Common myeloid progenitor, CD34-positive (primary cell): ENCODE measurements at regions of chr3 and their contacts with region 1.

Region 1: DNA sequence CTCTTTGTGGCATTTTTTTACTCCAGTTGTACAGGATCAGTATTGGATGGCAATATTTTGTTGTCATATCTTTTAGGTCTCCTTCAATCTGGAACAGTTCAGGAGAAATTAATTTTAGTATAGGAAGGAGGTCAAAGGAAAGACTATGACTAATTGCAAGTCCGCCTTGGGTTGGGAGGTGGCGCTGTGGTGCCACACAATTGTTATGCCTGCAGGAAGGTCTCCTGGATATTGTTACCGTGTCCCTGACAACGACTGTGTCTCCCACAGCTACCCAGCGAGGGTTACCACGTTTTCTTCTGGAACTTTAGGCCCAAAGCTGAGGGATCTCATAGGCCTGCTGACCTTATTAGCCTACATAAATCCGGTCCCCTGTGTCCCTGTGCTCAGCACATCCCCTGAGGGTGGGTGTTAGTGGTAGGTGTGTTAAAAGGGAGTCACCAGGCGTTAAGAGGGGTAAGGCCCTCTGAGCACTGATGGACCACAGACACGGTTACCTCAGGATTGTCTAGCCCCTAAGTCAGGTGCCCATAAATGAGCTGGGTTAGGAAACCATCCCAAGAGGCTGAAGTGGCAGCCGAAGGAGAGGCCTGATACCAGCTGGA is 31.5 kb downstream of the KCNAB1 start:
- DNase-seq: peak; percentile 56 to 77 (median 71)
- H3K4me3 ChIP-seq: no peak overlapping the region
- H3K27ac ChIP-seq: no peak overlapping the region
- H3K4me1 ChIP-seq: peaks cover 3 to 9% (median 6%) of the 10 kb centered on the region in 4 experiments
- H3K27me3 ChIP-seq: peaks cover 0 to 2% (median 0%) of the 10 kb centered on the region in 5 experiments

Region 2: DNA sequence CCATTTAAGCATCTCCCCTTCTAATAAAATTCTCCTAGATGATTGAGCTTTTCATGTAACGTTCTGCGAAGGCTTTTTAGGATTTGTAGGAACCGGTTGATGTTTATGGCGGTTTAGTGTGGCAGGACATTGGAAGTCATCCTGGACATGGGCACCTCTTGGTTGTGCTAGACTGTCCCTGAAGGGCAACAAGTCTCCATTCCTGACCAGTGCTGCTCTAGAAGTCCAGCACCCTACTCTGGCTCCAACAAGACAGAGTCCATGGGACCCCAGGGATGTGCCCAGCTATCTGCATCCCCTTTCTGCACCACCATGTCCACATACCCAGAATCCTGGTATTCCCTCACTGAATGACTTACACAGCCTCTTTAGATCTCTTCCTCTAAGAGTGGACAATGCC is 14.9 kb after region 1 on chr3:
- CTCF ChIA-PET with region 1: interaction called, 27 read pairs
- POLR2A ChIA-PET with region 1: no interaction called
- DNase-seq: no peak
- H3K4me3 ChIP-seq: no peak overlapping the region
- H3K27ac ChIP-seq: no peak overlapping the region
- H3K4me1 ChIP-seq: no peaks in the 10 kb centered on the region
- H3K27me3 ChIP-seq: no peaks in the 10 kb centered on the region

Region 3: GRCh38 chr3:156509189-156510174 is 357.6 kb after region 1 on chr3:
- CTCF ChIA-PET with region 1: interaction called, 72 read pairs
- POLR2A ChIA-PET with region 1: no interaction called
- DNase-seq: peak; percentile 67 to 83 (median 75)
- H3K4me3 ChIP-seq: no peak overlapping the region
- H3K27ac ChIP-seq: no peak overlapping the region
- H3K4me1 ChIP-seq: no peaks in the 10 kb centered on the region
- H3K27me3 ChIP-seq: peaks cover 0 to 3% (median 0%) of the 10 kb centered on the region in 5 experiments

Region 4: GRCh38 chr3:156542715-156543555 is 391.0 kb after region 1 on chr3:
- CTCF ChIA-PET with region 1: interaction called, 11 read pairs
- POLR2A ChIA-PET with region 1: no interaction called
- DNase-seq: no peak
- H3K4me3 ChIP-seq: no peak overlapping the region
- H3K27ac ChIP-seq: no peak overlapping the region
- H3K4me1 ChIP-seq: no peaks in the 10 kb centered on the region
- H3K27me3 ChIP-seq: no peaks in the 10 kb centered on the region

Region 5: GRCh38 chr3:156643729-156644389 is 491.9 kb after region 1 on chr3:
- CTCF ChIA-PET with region 1: no interaction called
- POLR2A ChIA-PET with region 1: no interaction called
- DNase-seq: peak; percentile 92 to 97 (median 95)
- H3K4me3 ChIP-seq: peak overlapping the region in 6 of 7 experiments; percentile 8 to 60 (median 36)
- H3K27ac ChIP-seq: peak overlapping the region; percentile 76 to 88
- H3K4me1 ChIP-seq: peaks cover 16 to 45% (median 21%) of the 10 kb centered on the region in 4 experiments
- H3K27me3 ChIP-seq: no peaks in the 10 kb centered on the region

Region 6: GRCh38 chr3:157136647-157137387 is 984.9 kb after region 1 on chr3:
- CTCF ChIA-PET with region 1: interaction called, 11 read pairs
- POLR2A ChIA-PET with region 1: no interaction called
- DNase-seq: no peak
- H3K4me3 ChIP-seq: no peak overlapping the region
- H3K27ac ChIP-seq: no peak overlapping the region
- H3K4me1 ChIP-seq: no peaks in the 10 kb centered on the region
- H3K27me3 ChIP-seq: no peaks in the 10 kb centered on the region